Left lung (tissue), 14 donors: ENCODE measurements at regions of chr5 and their contacts with region 1.

Region 1: GRCh38 chr5:140882591-140882899 is 621 bp downstream of the PCDHA13 start:
- DNase-seq: peak in 1 of 4 donors; percentile 2
- ATAC-seq: peak; percentile 82
- H3K4me3 ChIP-seq: peak overlapping the region in 1 of 2 donors; percentile 26
- H3K27ac ChIP-seq: no peak overlapping the region
- H3K4me1 ChIP-seq: no peaks in the 10 kb centered on the region
- H3K27me3 ChIP-seq: peaks cover 3 to 62% of the 10 kb centered on the region in 2 donors
- CTCF ChIP-seq: no peak

Region 2: DNA sequence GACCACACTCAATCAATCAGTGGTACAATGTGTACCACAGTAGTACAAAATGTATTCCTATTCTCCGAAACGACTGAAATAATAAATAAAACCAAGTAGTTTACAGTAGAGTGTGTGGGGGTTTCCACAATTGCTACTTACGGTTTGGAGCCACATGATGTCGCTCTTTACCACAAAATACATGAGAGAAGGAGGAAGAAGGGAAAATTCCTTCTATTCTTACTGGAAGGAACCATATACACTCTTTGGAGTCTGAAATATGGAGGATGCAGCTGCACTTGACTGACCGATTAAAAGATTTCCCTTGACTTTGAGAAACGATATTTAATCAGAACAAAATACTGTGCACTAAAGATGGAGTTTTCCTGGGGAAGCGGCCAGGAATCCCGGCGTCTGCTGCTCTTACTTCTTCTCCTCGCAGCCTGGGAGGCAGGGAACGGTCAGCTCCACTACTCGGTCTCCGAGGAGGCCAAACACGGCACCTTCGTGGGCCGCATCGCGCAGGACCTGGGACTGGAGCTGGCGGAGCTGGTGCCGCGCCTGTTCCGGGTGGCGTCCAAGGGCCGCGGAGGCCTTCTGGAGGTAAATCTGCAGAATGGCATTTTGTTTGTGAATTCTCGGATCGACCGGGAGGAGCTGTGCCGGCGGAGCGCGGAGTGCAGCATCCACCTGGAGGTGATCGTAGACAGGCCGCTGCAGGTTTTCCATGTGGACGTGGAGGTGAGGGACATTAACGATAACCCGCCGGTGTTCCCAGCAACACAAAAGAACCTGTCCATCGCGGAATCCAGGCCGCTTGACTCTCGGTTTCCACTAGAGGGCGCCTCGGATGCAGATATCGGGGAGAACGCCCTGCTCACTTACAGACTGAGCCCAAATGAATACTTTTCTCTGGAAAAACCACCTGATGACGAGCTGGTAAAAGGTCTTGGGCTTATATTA is 75.4 kb before region 1 on chr5 and contains the start of gene PCDHA4:
- intact Hi-C with region 1: no loop called
- DNase-seq: no peak
- ATAC-seq: peak; percentile 71
- H3K4me3 ChIP-seq: no peak within 1 kb of the TSS
- H3K27ac ChIP-seq: no peak within 1 kb of the TSS
- H3K4me1 ChIP-seq: no peaks in the 10 kb centered on the region
- H3K27me3 ChIP-seq: peaks cover 0 to 36% of the 10 kb centered on the region in 2 donors
- CTCF ChIP-seq: peak; percentile 21 to 28
- polyA plus RNA-seq, gene PCDHA4: 0.20 to 0.70 (median 0.46) TPM

Region 3: GRCh38 chr5:140988031-140988997 is 105.8 kb after region 1 on chr5:
- intact Hi-C with region 1: no loop called
- DNase-seq: peak in 1 of 4 donors; percentile 66
- ATAC-seq: peak; percentile 81
- H3K4me3 ChIP-seq: no peak overlapping the region
- H3K27ac ChIP-seq: peak overlapping the region; percentile 42 to 53
- H3K4me1 ChIP-seq: no peaks in the 10 kb centered on the region
- H3K27me3 ChIP-seq: no peaks in the 10 kb centered on the region
- CTCF ChIP-seq: no peak

Region 4: DNA sequence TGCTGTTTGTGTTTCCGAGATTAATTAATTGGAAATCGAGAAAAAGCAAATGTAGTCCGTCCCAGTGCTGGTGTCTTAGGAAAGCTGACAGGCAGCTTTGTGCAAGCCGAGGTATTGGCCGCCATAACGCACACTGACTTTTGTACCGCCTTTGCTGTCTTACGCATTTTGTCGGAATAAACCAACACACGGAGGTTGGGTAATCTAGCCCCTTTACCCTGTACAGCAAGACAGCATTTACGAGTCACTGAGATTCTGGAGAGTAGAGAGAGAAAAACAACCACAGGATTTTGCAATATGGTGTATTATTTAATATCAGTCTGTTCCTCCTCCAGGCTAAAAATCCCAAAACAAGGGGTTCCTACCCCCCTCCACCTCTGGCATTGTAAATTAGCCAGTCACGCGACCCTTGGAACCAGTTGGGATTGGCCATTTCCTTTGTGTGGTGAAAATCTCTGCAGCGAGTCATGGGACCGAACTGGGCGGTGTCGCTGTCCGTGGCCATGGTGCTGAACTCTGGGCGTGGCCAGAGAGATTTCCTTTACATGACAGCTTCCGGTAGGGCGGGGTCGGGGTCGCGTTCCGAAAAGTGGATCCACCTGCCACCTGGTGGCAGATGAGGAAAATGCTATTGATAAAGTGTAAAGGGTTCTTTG is 158.4 kb after region 1 on chr5:
- intact Hi-C with region 1: loop called in 1 of 2 experiments (anchors 10 kb)
- DNase-seq: peak; percentile 85 to 95 (median 88)
- ATAC-seq: peak; percentile 98
- H3K4me3 ChIP-seq: peak overlapping the region; percentile 21 to 27
- H3K27ac ChIP-seq: peak overlapping the region; percentile 37 to 63
- H3K4me1 ChIP-seq: no peaks in the 10 kb centered on the region
- H3K27me3 ChIP-seq: peaks cover 0 to 10% of the 10 kb centered on the region in 2 donors
- CTCF ChIP-seq: peak; percentile 53 to 61